SK-N-SH (cell line): ENCODE measurements at regions of chr3 and their contacts with region 1.

Region 1: GRCh38 chr3:12841149-12841970 is at the start of gene RPL32:
- DNase-seq: peak; percentile 83
- H3K4me3 ChIP-seq: peak within 1 kb of the TSS; percentile 78 to 97
- H3K27ac ChIP-seq: peak within 1 kb of the TSS; percentile 83 to 96
- H3K4me1 ChIP-seq: peaks cover 22 to 29% of the 10 kb centered on the region in 2 experiments; a peak in 3 of 4 replicates
- H3K27me3 ChIP-seq: no peaks in the 10 kb centered on the region
- CTCF ChIP-seq: peak; percentile 84
- EP300 ChIP-seq: no peak
- RAD21 ChIP-seq: peak; percentile 44
- polyA plus RNA-seq, gene RPL32: 2,077 and 2,311 TPM in 2 replicates

Region 2: DNA sequence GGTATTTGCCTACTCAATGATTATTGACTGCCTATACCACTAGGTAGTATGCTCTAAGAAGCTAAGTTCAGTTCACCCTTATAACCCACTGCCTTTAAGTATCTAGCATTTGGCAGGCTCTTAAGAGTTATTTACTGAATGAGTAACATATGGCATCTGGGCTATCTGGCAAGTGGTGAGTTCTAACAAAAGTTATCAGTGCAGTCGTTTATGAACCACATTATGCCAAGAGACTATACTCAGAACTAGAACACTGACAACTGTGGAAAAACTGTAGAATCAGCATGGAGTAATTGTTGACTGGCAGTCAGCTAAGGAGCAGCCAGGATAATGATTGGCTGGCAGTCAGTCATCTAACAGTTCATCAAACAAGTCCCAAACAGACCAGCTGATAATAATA is 203.3 kb before region 1 on chr3:
- CTCF ChIA-PET with region 1: no interaction called
- POLR2A ChIA-PET with region 1: no interaction called
- DNase-seq: no peak
- H3K4me3 ChIP-seq: no peak overlapping the region
- H3K27ac ChIP-seq: no peak overlapping the region
- H3K4me1 ChIP-seq: peaks cover 0 to 6% of the 10 kb centered on the region in 2 experiments; a peak in 2 of 4 replicates
- H3K27me3 ChIP-seq: no peaks in the 10 kb centered on the region
- CTCF ChIP-seq: no peak
- EP300 ChIP-seq: no peak
- RAD21 ChIP-seq: no peak

Region 3: DNA sequence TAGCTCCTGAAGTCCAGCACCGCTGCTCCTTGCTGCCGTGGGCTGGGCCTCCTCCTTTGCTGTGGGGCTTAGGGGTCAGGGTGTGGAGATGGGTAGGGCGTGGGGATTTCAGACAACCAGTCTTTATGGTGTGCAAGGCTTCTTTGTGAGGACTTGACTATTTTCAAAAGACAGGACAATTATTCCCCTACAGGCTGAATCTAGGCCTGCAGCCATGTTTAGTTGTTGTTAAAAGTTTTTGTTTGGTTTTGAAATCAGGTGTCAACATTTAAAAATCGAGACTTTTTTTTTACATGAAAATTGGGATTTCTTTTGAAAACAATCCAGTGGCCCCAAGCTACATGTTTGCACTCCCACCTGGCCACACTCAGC is 10.6 kb before region 1 on chr3:
- CTCF ChIA-PET with region 1: interaction called, 22 read pairs
- POLR2A ChIA-PET with region 1: interaction called, 5 read pairs
- DNase-seq: no peak
- H3K4me3 ChIP-seq: no peak overlapping the region
- H3K27ac ChIP-seq: no peak overlapping the region; a peak in 1 of 4 replicates
- H3K4me1 ChIP-seq: no peaks in the 10 kb centered on the region
- H3K27me3 ChIP-seq: no peaks in the 10 kb centered on the region
- CTCF ChIP-seq: peak; percentile 23; the same call in 1 of the 2 replicates
- EP300 ChIP-seq: no peak
- RAD21 ChIP-seq: no peak

Region 4: GRCh38 chr3:12853191-12853741 is 11.9 kb after region 1 on chr3:
- CTCF ChIA-PET with region 1: interaction called, 19 read pairs
- POLR2A ChIA-PET with region 1: no interaction called
- DNase-seq: no peak
- H3K4me3 ChIP-seq: no peak overlapping the region
- H3K27ac ChIP-seq: no peak overlapping the region
- H3K4me1 ChIP-seq: no peaks in the 10 kb centered on the region; a peak in 1 of 4 replicates
- H3K27me3 ChIP-seq: no peaks in the 10 kb centered on the region; the same call in 1 of the 2 replicates
- CTCF ChIP-seq: no peak
- EP300 ChIP-seq: no peak
- RAD21 ChIP-seq: no peak

Region 5: GRCh38 chr3:12861611-12862010 is 20.3 kb after region 1 on chr3:
- CTCF ChIA-PET with region 1: interaction called, 18 read pairs
- POLR2A ChIA-PET with region 1: interaction called, 3 read pairs
- DNase-seq: no peak
- H3K4me3 ChIP-seq: no peak overlapping the region
- H3K27ac ChIP-seq: no peak overlapping the region
- H3K4me1 ChIP-seq: no peaks in the 10 kb centered on the region; a peak in 1 of 4 replicates
- H3K27me3 ChIP-seq: no peaks in the 10 kb centered on the region; the same call in 1 of the 2 replicates
- CTCF ChIP-seq: no peak
- EP300 ChIP-seq: no peak
- RAD21 ChIP-seq: no peak